OCI-LY7 (cell line): ENCODE measurements at regions of chr14 and their contacts with region 1.

Region 1: GRCh38 chr14:105490572-105491366 is at the start of gene TEDC1:
- DNase-seq: peak; percentile 100
- H3K4me3 ChIP-seq: peak within 1 kb of the TSS; percentile 96
- H3K27ac ChIP-seq: peak within 1 kb of the TSS; percentile 80
- H3K4me1 ChIP-seq: peaks cover 37% of the 10 kb centered on the region
- CTCF ChIP-seq: peak; percentile 68
- total RNA-seq, gene TEDC1: 53.2 and 57.4 TPM in 2 replicates

Region 2: DNA sequence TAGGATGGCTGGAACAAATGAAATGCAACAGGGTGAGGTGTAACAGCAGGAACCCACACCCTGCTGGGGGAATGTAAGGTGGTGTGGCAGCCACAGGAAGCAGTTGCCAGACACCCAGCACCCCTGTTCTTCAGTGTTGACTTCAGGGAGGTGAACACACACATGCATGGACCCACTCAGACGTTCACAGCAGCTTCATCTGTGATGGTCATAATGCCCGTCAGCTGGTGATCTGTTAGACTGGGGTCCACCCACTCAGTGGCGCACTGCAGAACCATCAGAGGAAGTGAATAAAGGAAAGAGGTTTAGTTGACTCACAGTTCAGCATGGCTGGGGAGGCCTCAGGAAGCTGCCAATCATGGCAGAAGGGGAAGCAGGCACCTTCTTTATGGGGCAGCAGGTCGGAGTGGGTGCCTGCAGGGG is 115.1 kb before region 1 on chr14:
- CTCF ChIA-PET with region 1: no interaction called
- POLR2A ChIA-PET with region 1: interaction called, 5 read pairs
- intact Hi-C with region 1: loop called (anchors 1 kb)
- DNase-seq: peak; percentile 23
- H3K4me3 ChIP-seq: no peak overlapping the region
- H3K27ac ChIP-seq: no peak overlapping the region
- H3K4me1 ChIP-seq: peaks cover 8% of the 10 kb centered on the region
- CTCF ChIP-seq: no peak

Region 3: GRCh38 chr14:105398044-105398725 is 92.6 kb before region 1 on chr14 and contains the start of gene TEX22:
- CTCF ChIA-PET with region 1: interaction called, 21 read pairs
- POLR2A ChIA-PET with region 1: no interaction called
- intact Hi-C with region 1: loop called (anchors 1 kb)
- DNase-seq: peak; percentile 93
- H3K4me3 ChIP-seq: peak within 1 kb of the TSS; percentile 86
- H3K27ac ChIP-seq: peak within 1 kb of the TSS; percentile 61
- H3K4me1 ChIP-seq: peaks cover 23% of the 10 kb centered on the region
- CTCF ChIP-seq: peak; percentile 61
- total RNA-seq, gene TEX22: 1.3 and 2.3 TPM in 2 replicates

Region 4: DNA sequence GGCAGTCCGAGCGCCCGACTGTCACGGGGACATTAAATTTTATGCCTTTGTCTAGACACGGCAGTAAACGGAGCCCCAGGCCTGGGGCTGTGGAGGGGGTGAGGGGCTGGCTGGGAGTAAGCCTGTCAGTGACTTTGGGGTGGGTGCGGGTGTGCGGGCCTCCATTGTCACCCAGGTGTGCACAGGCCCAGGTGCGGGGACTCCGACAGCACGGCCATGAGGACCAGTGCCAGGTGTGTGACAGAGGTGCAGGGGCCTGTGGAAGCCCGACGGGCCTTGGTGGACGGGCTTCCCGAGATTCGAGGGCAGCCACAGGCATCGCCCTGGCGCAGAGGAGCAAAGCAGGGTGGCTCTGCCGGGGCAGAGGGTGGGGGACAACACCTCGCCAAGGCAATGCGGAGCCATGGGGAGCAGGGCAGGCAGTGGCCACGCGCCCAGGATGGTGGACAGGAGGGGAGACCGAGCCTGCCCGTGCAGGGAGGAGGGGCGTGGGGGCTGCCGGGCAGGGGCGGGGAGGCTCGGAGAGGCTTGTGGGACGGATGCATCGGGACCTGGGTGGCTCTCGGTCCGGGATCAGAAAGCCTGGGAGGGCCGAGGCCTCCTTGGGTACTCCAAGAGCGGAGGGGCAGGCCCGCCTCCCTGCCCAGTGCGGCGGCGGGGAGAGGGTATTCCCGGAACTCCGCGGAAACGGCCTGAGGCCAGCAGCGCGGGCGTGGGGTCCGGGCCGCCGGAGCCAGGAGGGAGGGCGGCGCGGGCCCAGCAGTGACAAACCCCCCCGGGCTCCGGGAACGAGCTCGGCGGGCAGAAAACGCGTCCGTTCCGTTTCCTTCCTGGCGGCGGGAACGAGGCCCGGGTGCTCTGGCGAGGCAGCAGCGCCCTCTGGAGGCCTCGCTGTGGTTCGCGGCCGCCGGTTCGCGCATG is 37.2 kb after region 1 on chr14:
- CTCF ChIA-PET with region 1: interaction called, 3 read pairs
- POLR2A ChIA-PET with region 1: no interaction called
- intact Hi-C with region 1: loop called (anchors 2 kb)
- DNase-seq: peak; percentile 84
- H3K4me3 ChIP-seq: peak overlapping the region; percentile 64
- H3K27ac ChIP-seq: no peak overlapping the region
- H3K4me1 ChIP-seq: peaks cover 46% of the 10 kb centered on the region
- CTCF ChIP-seq: peak; percentile 76

Region 5: DNA sequence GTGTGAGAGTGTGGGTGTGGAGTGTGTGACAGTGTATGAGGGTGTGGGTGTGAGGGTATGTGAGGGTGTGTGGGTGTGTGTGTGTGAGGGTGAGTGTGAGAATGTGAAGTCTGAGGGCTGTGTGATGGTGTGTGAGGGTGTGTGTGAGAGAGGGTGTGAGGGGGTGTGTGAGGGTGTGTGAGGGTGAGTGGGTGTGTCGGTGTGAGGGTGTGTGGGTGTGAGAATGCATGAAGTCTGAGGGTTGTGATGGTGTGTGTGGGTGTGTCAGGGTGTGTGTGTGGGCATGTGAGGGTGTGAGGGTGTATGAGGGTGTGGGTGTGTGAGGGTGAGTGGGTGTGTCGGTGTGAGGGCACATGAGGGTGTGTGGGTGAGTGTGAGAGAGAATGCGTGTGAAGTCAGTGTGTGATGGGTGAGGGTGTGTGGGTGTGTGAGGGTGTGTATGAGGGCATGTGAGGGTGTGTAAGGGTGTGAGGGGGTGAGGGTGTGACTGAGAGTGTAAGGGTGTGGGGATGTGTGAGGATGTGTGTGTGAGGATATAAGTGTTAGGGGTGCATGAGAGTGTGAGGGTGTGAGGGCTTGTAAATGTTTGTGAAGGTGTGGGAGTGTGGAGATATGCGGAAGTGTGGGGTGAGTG is 72.1 kb after region 1 on chr14:
- CTCF ChIA-PET with region 1: no interaction called
- POLR2A ChIA-PET with region 1: no interaction called
- intact Hi-C with region 1: no loop called
- DNase-seq: peak; percentile 25
- H3K4me3 ChIP-seq: no peak overlapping the region
- H3K27ac ChIP-seq: peak overlapping the region; percentile 85
- H3K4me1 ChIP-seq: peaks cover 65% of the 10 kb centered on the region
- CTCF ChIP-seq: no peak

Region 6: DNA sequence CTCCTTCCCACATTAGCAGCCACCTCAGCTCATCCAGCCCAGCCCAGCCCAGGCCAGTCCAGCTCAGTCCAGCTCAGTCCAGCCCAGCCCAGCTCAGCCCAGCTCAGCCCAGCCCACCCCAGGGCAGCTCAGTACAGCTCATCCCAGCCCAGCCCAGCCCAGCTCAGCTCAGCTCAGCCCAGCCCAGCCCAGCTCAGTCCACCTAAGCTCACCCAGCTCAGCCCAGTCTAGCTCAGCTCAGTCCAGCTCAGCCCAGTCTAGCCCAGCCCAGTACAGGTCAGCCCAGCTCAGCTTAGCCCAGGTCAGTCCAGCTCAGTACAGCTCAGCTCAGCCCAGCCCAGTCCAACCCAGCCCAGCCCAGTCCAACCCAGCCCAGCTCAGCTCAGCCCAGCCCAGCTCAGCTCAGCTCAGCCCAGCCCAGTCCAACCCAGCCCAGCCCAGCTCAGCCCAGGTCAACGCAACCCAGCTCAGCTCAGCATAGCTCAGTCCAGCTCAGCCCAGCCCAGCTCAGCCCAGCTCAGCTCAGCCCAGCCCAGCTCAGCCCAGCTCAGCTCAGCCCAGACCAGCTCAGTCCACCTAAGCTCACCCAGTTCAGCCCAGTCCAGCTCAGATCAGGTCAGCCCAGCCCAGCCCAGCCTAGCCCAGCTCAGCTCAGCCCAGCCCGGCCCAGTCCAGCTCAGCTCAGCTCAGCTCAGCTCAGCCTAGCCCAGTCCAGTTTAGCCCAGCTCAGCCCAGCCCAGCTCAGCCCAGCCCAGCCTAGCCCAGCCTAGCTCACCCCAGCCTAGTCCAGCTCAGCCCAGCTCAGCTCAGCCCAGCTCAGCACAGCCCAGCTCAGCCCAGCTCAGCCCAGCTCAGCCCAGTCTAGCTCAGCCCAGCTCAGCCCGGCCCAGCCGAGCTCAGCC is 98.6 kb after region 1 on chr14:
- CTCF ChIA-PET with region 1: interaction called, 11 read pairs
- POLR2A ChIA-PET with region 1: no interaction called
- intact Hi-C with region 1: no loop called
- DNase-seq: no peak
- H3K4me3 ChIP-seq: no peak overlapping the region
- H3K27ac ChIP-seq: no peak overlapping the region
- H3K4me1 ChIP-seq: peaks cover 16% of the 10 kb centered on the region
- CTCF ChIP-seq: no peak